Activated T-helper 2 cell treated with anti-CD3 and anti-CD28 coated beads, Interferon-gamma antibody, Interleukin-2, Interleukin-4, amounts not matched to agents 10 μg/mL and 5 μg/mL and 100 μg/mL, durations not matched to agents 14 hours and 24 hours and 36 hours (primary cell): ENCODE measurements at regions of chr6 and their contacts with region 1.

Region 1: DNA sequence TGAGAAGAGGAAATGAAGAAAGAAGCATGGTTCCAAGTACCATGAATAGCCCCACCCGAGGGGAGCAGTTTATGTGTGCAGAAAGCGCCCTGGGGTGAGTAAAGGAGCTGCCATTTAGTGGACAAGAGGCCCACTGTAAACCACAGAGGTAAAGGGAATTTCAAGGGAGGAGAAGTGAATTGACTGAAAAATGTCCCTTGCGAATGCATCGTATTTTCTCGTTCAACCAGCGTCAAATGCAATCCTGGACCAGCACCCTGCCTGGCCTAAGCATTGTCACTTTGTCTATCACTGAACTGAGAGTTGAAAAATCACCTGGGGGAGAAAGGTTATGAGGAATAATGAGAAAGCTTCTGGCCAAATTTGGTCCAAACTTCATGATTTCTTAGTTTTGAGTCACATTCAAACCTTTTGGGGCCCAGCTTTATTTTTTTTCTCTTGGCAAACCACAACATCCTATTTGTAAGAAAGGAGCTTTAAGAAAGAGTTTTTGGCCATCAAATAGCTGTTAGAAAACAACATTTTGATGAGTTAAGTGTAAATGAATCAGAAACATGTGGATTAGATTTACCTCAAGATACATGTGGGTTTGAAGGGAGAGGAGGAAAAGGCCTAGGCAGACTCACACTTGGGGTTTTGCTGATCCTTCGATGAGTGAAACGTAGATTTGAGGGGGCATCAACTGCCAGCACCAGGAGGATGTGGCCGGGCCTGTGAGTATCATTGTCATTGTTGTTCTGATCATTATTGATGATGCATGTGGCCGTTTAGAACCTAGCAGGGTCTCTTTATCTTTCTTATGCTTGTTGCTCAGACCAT is 214.0 kb downstream of the CLIC5 start:
- DNase-seq: peak; percentile 55
- H3K4me3 Mint-ChIP-seq: no peak overlapping the region
- H3K27ac Mint-ChIP-seq: peak overlapping the region; percentile 88
- H3K4me1 Mint-ChIP-seq: peaks cover 36% of the 10 kb centered on the region
- H3K27me3 Mint-ChIP-seq: no peaks in the 10 kb centered on the region

Region 2: DNA sequence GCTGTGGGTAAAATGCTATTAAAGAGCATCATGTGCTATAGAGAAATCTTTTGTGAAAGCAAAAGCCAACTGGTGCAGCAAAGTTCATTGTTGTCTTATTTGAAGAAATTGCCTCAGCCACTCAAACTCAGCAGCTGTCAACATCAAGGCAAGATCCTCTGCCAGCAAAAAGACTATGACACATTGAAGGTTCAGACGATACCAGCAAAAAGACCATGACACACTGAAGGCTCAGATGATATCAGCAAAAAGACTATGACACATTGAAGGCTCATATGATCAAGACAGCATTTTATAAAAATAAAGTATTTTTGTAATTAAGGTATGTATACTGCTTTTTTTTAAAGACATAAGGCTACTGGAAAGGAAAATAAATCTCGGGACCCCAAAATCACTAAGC is 591.9 kb before region 1 on chr6:
- intact Hi-C with region 1: loop called (anchors 5 kb)
- DNase-seq: no peak
- H3K4me3 Mint-ChIP-seq: no peak overlapping the region
- H3K27ac Mint-ChIP-seq: peak overlapping the region; percentile 47
- H3K4me1 Mint-ChIP-seq: peaks cover 50% of the 10 kb centered on the region
- H3K27me3 Mint-ChIP-seq: no peaks in the 10 kb centered on the region

Region 3: GRCh38 chr6:45421709-45422502 is 379.8 kb before region 1 on chr6:
- intact Hi-C with region 1: loop called (anchors 5 kb)
- DNase-seq: peak; percentile 64
- H3K4me3 Mint-ChIP-seq: peak overlapping the region; percentile 100
- H3K27ac Mint-ChIP-seq: peak overlapping the region; percentile 99
- H3K4me1 Mint-ChIP-seq: peaks cover 45% of the 10 kb centered on the region
- H3K27me3 Mint-ChIP-seq: no peaks in the 10 kb centered on the region

Region 4: DNA sequence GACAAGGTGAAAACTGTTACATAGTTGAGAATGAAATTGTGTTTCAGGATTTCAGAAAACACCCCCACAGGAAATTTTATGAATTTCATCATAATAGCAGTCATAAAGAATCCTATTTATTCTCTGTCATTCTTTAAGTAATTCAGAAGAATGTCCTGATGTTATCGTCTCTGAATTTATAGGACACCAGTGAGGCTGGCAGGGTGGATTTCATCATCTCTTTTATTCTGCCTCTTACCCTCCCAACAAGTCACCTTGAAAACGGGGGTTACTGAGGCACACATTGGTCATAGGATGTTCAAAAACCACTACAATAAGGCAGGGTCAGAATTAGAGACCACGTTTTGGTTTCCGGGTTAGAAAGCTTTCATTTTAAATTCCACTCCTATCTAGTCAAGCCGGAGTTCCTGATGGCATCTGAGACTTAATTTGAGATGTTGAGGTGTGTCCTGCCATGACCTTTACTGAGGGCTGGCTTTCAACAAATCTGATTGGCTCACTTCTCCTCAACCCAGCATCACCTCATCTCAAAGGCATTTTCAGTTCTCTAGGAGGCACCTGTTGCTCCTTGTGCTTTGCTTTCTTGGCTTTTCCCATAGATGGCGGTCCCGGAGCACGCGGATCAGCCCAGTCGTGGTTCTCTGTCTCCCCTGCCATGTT is 193.3 kb before region 1 on chr6:
- intact Hi-C with region 1: loop called (anchors 5 kb)
- DNase-seq: no peak
- H3K4me3 Mint-ChIP-seq: no peak overlapping the region
- H3K27ac Mint-ChIP-seq: peak overlapping the region; percentile 78
- H3K4me1 Mint-ChIP-seq: peaks cover 48% of the 10 kb centered on the region
- H3K27me3 Mint-ChIP-seq: no peaks in the 10 kb centered on the region

Region 5: GRCh38 chr6:45737331-45738056 is 64.2 kb before region 1 on chr6:
- intact Hi-C with region 1: loop called (anchors 1 kb)
- DNase-seq: peak; percentile 35
- H3K4me3 Mint-ChIP-seq: peak overlapping the region; percentile 47
- H3K27ac Mint-ChIP-seq: peak overlapping the region; percentile 92
- H3K4me1 Mint-ChIP-seq: peaks cover 69% of the 10 kb centered on the region
- H3K27me3 Mint-ChIP-seq: no peaks in the 10 kb centered on the region

Region 6: DNA sequence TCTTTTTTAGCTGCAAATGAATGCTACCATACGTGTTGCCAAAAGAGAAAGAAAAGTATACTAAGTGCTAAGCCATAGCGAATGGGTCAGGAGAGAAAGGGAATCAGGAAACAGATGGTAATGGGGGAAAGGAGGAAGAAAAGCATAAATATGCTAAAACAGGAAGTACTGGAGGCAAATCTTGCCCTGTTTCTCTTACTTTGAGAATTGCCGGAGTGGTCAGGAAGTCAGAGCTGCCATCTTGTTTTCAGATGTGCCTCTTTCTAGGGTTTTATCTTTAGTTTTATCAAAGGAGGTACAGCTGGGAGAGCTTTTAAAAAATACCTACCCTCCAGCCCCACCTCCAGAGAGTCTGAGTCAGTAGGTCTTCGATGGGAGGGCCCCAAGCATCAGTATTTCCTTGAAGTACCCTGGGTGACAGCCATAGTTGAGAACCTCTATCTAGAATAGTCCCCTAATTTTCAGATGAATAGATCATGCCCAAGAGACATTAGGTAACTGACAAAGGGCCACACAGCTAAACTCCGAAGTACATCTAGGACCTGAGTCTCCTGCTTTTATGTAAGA is 20.6 kb after region 1 on chr6:
- intact Hi-C with region 1: loop called (anchors 1 kb)
- DNase-seq: no peak
- H3K4me3 Mint-ChIP-seq: peak overlapping the region; percentile 47
- H3K27ac Mint-ChIP-seq: peak overlapping the region; percentile 89
- H3K4me1 Mint-ChIP-seq: peaks cover 40% of the 10 kb centered on the region
- H3K27me3 Mint-ChIP-seq: no peaks in the 10 kb centered on the region

Region 7: GRCh38 chr6:45843848-45844521 is 42.3 kb after region 1 on chr6:
- intact Hi-C with region 1: no loop called
- DNase-seq: no peak
- H3K4me3 Mint-ChIP-seq: no peak overlapping the region
- H3K27ac Mint-ChIP-seq: no peak overlapping the region
- H3K4me1 Mint-ChIP-seq: peaks cover 1% of the 10 kb centered on the region
- H3K27me3 Mint-ChIP-seq: no peaks in the 10 kb centered on the region

Region 8: DNA sequence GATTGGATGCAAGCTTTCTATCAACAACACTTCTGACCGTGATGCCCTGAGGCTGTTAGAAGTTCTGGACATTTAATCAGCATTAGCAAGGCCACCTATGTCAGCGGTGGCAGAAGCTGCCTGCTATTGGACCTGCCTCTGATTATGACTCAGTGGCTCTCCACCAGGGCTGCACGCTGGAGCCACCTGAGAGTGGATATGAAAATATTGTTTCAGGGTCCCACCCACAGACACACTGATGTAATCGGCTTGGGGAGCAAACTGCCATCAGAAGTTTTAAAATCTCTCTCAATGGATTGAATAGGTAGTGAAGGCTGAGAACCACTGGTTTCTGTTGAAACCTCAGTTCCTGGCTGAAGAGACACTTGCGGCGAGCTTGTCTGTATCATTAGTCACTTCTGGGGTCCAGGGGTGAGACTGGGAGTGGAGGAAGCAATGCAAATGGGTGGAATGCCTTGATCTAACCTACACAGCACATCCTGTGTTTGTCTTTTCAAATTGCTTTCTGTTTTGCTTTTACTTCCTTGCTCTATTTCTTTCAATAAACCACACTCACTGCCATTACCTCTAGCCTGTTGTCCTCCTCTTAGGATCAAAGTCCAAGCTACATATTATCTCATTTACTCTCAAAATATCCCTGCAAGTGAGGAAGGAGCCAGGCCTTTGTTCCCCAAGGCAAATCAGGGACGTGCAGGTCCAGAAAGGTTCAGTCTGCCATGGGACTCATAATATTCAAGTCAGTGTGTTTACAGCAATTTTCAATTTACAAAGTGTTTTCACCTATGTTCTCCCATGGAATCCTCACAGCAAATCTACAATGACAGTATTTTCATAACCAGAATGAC is 209.8 kb after region 1 on chr6:
- intact Hi-C with region 1: loop called (anchors 2 kb)
- DNase-seq: peak; percentile 75
- H3K4me3 Mint-ChIP-seq: peak overlapping the region; percentile 30
- H3K27ac Mint-ChIP-seq: peak overlapping the region; percentile 80
- H3K4me1 Mint-ChIP-seq: peaks cover 58% of the 10 kb centered on the region
- H3K27me3 Mint-ChIP-seq: peaks cover 24% of the 10 kb centered on the region